Vagina (tissue), 2 donors: ENCODE measurements at regions of chr2 and their contacts with region 1.

Region 1: DNA sequence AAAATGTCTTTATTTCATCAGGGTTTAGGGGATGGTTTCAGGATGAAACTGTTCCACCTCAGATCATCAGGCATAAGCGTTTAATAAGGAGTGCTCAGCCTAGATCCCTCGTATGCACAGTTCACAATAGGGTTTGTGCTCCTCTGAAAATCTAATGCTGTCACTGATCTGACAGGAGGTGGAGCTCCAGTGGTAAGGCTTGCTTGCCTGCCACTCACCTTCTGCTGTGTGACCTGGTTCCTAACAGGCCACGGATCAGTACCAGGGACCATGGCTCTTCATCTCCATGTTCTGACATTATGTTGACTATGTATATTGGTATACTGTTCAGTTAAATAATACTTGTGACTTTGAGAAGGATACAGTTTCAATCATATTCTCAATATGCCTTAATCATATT is 41.6 kb downstream of the PPIG start:
- DNase-seq: no peak
- H3K4me3 ChIP-seq: no peak overlapping the region
- H3K27ac ChIP-seq: no peak overlapping the region
- H3K4me1 ChIP-seq: no peaks in the 10 kb centered on the region
- H3K27me3 ChIP-seq: no peaks in the 10 kb centered on the region
- CTCF ChIP-seq: no peak
- POLR2A ChIP-seq: no peak

Region 2: DNA sequence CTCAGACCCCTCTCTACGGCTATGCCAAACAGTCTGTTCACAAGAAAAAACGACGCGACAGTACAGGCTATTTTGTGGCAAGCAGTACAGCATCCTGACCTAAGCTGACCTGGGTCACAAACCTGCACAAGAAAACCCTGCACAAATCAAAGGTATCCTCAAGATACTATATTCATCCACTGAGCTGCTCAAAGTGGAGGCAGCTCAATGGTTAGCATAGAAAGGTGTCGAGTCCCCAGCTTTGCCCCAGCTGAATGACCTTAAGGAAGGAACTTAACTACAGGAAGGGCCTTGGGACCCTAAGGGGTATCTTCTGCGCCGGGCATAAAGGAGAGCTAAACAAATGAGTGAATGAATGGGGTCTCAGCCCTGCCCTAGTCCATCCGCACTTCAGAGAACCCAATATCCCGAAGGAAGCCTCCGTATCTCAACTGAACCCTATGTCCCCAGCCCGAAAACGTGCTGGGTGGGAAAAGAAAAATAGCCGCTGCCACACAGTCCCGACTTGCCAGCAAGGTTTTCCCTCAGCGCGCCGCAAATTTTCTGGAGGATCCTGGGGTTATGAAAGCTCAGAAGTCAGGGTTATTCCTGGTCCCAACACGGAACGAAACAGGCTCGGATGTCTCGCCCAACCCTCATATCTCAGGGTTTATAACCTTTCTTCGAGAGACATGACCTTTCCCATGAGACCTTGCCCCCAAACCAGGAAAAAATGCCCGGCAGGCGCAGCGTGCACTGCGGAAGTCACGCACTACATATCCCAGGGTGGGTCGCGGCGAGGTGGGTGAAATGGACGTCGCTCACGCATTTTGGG is 52.4 kb before region 1 on chr2 and contains the start of gene FASTKD1:
- intact Hi-C with region 1: loop called (anchors 2 kb)
- DNase-seq: no peak
- H3K4me3 ChIP-seq: peak within 1 kb of the TSS; percentile 51 to 84
- H3K27ac ChIP-seq: peak within 1 kb of the TSS; percentile 66
- H3K4me1 ChIP-seq: peaks cover 16% of the 10 kb centered on the region
- H3K27me3 ChIP-seq: no peaks in the 10 kb centered on the region
- CTCF ChIP-seq: peak in 1 of 3 experiments; percentile 30
- POLR2A ChIP-seq: no peak
- total RNA-seq, gene FASTKD1: 17.7 TPM